ENCODE measurements at regions of chr16 and their contacts with region 1.

Region 1: GRCh38 chr16:85894266-85894665 is 4.7 kb upstream of the IRF8 start:
- DNase-seq: no peak
- H3K4me3 ChIP-seq: no peak overlapping the region
- H3K27ac ChIP-seq: no peak overlapping the region
- H3K4me1 ChIP-seq: no peaks in the 10 kb centered on the region
- H3K27me3 ChIP-seq: peaks cover 19% of the 10 kb centered on the region
- CTCF ChIP-seq: peak in 1 of 2 donors; percentile 17

Region 2: GRCh38 chr16:85969159-85969558 is 74.9 kb after region 1 on chr16:
- CTCF ChIA-PET with region 1: no interaction called
- dilution Hi-C with region 1: no loop called
- in situ Hi-C with region 1: no loop called
- intact Hi-C with region 1: no loop called
- DNase-seq: peak; percentile 18
- H3K4me3 ChIP-seq: no peak overlapping the region
- H3K27ac ChIP-seq: no peak overlapping the region
- H3K4me1 ChIP-seq: no peaks in the 10 kb centered on the region
- H3K27me3 ChIP-seq: no peaks in the 10 kb centered on the region
- CTCF ChIP-seq: no peak

Region 3: DNA sequence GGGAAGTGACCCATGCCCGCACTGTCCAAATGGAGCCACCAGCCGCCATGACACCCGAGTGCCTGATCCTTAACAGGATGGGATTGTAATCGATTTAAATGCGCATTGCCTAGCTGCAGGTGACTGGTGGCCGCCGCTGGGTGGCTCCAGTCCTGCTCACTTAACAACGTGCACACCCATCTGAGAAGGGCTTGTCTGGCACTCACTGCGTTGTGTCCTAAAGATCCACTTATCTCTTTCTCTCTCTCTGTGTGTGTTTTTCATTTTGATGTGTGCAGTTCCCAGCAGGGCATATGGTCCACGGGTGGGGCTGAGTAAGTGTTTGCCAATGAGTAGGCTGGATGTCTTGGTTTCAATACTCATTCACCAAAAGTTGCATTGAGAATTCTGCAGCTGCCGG is 85.3 kb after region 1 on chr16:
- CTCF ChIA-PET with region 1: no interaction called
- dilution Hi-C with region 1: loop called (anchors 5 kb)
- in situ Hi-C with region 1: no loop called
- intact Hi-C with region 1: no loop called
- DNase-seq: no peak
- H3K4me3 ChIP-seq: no peak overlapping the region
- H3K27ac ChIP-seq: no peak overlapping the region
- H3K4me1 ChIP-seq: no peaks in the 10 kb centered on the region
- H3K27me3 ChIP-seq: no peaks in the 10 kb centered on the region
- CTCF ChIP-seq: no peak